Dorsolateral prefrontal cortex (tissue), 120 donors: ENCODE measurements at regions of chr5 and their contacts with region 1.

Region 1: GRCh38 chr5:174418928-174419796 is 305.2 kb upstream of the MSX2 start:
- DNase-seq: peak; percentile 63 to 97 (median 94)
- H3K4me3 ChIP-seq: peak overlapping the region; percentile 6 to 67 (median 46)
- H3K27ac ChIP-seq: peak overlapping the region in 2 of 59 donors; percentile 2 to 43
- H3K27me3 ChIP-seq: peaks cover 0 to 12% (median 0%) of the 10 kb centered on the region in 45 donors
- CTCF ChIP-seq: peak; percentile 89 to 99 (median 97)

Region 2: GRCh38 chr5:174355208-174355612 is 64.0 kb before region 1 on chr5:
- intact Hi-C with region 1: no loop called
- DNase-seq: no peak
- H3K4me3 ChIP-seq: no peak overlapping the region
- H3K27ac ChIP-seq: no peak overlapping the region
- H3K27me3 ChIP-seq: peaks cover 0 to 4% (median 0%) of the 10 kb centered on the region in 45 donors
- CTCF ChIP-seq: no peak

Region 3: DNA sequence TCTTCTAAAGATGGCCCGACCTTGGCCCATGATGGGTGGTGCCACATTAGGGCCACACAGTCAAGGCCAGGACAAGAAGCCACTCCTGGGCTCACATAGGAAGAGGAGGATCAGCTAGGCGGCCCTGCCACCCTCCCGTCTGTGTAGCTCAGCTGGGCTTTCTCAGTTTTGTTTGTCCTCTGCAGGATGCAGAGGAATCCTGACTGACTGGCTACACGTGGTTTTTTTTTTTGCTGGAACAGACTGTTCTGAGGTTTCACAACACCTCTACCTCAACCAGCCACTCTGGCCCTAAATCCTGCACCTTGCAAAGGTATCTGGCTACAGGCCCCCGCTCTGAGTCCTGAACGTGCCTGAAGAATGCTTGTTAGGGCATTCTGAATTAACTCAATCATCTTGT is 216.9 kb after region 1 on chr5:
- intact Hi-C with region 1: no loop called
- DNase-seq: no peak
- H3K4me3 ChIP-seq: no peak overlapping the region
- H3K27ac ChIP-seq: no peak overlapping the region
- H3K27me3 ChIP-seq: no peaks in the 10 kb centered on the region
- CTCF ChIP-seq: no peak

Region 4: DNA sequence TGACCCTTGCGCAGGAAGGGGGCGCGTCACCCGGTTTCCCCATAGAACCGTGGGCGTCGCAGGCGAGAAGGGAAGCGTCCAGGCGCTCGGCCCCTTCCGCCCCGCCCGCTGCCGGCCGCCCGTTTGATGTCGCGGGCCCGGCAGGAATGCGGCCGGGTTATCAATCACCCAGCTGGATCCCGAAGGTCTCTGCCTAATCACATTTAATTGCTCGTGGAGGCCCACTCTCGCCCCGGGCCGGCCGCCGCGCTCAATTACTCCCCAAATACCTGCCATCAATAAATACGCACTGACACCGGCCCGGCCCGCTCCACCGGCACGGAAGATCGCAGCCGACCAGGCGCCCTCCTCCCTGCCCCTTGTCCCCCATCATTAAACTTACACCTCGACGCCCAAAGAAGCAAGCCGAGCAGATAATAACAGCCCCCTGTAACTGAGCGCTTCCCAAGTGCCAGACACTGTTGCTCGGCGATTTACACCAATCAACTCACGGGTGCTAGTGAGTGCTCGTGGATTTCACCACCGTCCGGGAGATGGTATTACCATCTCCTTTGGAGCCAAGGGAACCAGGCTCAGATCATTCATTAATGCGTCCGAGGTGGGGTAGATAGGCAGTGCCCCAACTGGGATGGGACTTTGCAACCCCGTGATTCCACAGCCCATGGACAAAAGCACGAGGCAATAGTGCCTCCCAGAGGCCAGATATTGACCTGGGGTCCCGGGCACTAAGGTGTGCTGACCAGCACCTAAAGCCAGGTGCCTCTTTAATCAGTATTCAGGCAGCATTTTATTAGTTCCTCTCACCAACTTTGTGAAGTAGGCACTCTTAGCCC is 316.6 kb after region 1 on chr5:
- intact Hi-C with region 1: loop called (anchors 1 to 5 kb)
- DNase-seq: no peak
- H3K4me3 ChIP-seq: peak overlapping the region in 38 of 59 donors; percentile 6 to 52 (median 32)
- H3K27ac ChIP-seq: no peak overlapping the region
- H3K27me3 ChIP-seq: peaks cover 4 to 78% (median 67%) of the 10 kb centered on the region in 45 donors
- CTCF ChIP-seq: peak in 54 of 56 donors; percentile 16 to 71 (median 46)

Region 5: GRCh38 chr5:174793684-174794328 is 374.6 kb after region 1 on chr5:
- intact Hi-C with region 1: loop called (anchors 1 to 2 kb)
- DNase-seq: peak; percentile 22 to 85 (median 61)
- H3K4me3 ChIP-seq: peak overlapping the region in 21 of 59 donors; percentile 5 to 54 (median 18)
- H3K27ac ChIP-seq: no peak overlapping the region
- H3K27me3 ChIP-seq: peaks cover 0 to 29% (median 4%) of the 10 kb centered on the region in 45 donors
- CTCF ChIP-seq: peak; percentile 48 to 96 (median 85)

Region 6: DNA sequence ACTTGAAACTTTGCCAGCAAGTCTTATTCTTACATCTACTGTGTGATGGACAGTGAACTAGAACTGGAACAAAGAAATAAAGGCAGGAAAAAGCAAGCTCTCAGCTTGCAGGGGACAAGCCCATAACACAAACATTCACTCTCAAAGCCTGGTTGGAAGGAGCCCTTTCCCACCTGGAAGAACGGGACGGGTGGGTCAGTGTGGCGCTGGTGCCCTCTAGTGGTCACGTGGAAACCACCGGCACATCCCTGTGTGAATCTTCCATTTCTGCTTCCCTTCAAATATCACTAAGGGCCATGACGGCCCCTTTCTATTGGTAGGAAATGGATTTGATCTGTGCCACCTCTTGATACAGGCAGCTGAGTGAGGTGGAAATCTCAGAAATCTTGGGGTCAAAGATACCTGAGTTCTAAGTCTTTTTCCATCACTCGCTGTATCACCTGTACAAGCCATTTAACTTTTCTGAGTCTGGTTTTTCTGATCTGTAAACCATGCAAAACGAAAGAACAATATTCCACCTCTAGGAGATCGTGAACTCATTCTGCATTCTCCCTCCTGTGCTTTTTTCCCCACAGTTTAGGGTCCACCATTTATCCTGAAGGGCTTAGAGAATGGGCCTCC is 516.8 kb after region 1 on chr5:
- intact Hi-C with region 1: loop called (anchors 5 kb)
- DNase-seq: peak in 9 of 10 donors; percentile 30 to 80 (median 67)
- H3K4me3 ChIP-seq: no peak overlapping the region
- H3K27ac ChIP-seq: peak overlapping the region in 9 of 59 donors; percentile 4 to 64 (median 21)
- H3K27me3 ChIP-seq: peaks cover 0 to 3% (median 0%) of the 10 kb centered on the region in 45 donors
- CTCF ChIP-seq: peak; percentile 72 to 97 (median 92)